ENCODE measurements at regions of chr5 and their contacts with region 1.

Region 1: DNA sequence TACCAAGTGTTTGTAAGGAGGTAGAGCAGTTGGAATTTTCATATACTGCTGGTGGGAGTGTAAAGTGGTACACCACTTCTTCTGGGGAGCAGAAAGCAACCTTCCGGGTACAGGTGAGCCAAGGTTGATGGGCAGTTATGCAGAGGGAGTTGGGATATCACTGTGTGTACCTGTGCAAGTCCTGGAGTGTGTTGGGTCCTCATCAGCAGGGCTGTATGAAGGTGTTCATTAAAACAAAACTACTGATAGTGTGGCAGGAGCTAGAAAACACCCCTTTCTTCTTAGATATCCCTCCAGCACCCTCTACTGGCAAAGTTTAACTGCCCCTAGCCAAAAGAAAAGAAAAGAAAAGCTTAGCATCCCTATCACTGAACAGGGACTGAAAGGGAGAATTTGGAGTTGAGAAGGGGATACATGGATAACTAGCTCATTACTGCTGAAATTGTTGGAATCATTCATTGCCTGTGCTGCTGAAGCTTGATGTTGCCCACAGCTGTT is 10.7 kb downstream of the MARCHF6 start:
- DNase-seq: peak; percentile 31
- H3K4me3 Mint-ChIP-seq: no peak overlapping the region
- H3K27ac Mint-ChIP-seq: no peak overlapping the region
- H3K4me1 Mint-ChIP-seq: peaks cover 19% of the 10 kb centered on the region
- H3K27me3 Mint-ChIP-seq: no peaks in the 10 kb centered on the region

Region 2: DNA sequence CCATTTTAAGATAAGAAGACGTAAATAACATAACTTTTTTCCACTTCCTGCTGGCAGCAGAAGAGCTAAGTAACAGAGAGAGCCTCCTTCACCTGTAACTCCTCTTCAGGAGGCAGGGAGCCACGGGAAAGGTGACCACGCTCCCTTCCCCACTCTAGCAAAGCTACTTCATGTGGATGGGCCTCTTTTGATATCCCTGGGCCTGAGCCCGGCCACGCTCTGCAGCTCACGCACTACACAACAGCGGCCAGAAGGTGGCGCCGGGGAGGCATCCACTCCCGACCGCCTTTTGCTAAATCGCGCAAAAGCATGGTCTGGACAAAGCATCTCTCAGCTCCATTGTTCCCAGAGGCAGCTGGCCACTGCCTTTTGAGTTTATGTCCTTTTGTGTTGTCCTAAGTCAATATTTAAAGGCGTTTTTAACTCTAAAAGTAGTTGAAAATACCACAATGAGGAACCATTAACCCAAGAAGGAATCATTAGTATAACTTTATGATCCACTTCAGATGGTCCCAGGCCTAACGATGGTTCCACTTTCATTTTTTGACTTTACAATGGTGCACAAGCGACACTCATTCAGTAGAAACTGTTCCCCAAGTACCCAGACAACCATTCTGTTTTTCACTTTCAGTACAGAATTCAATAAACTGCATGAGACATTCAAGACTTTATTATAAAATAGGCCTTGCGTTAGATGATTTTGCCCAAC is 80.2 kb before region 1 on chr5:
- CTCF ChIA-PET with region 1: interaction called, 24 read pairs
- DNase-seq: peak; percentile 81
- H3K4me3 Mint-ChIP-seq: no peak overlapping the region
- H3K27ac Mint-ChIP-seq: no peak overlapping the region
- H3K4me1 Mint-ChIP-seq: peaks cover 14% of the 10 kb centered on the region
- H3K27me3 Mint-ChIP-seq: peaks cover 10% of the 10 kb centered on the region